ENCODE measurements at regions of chr1 and their contacts with region 1.

Region 1: DNA sequence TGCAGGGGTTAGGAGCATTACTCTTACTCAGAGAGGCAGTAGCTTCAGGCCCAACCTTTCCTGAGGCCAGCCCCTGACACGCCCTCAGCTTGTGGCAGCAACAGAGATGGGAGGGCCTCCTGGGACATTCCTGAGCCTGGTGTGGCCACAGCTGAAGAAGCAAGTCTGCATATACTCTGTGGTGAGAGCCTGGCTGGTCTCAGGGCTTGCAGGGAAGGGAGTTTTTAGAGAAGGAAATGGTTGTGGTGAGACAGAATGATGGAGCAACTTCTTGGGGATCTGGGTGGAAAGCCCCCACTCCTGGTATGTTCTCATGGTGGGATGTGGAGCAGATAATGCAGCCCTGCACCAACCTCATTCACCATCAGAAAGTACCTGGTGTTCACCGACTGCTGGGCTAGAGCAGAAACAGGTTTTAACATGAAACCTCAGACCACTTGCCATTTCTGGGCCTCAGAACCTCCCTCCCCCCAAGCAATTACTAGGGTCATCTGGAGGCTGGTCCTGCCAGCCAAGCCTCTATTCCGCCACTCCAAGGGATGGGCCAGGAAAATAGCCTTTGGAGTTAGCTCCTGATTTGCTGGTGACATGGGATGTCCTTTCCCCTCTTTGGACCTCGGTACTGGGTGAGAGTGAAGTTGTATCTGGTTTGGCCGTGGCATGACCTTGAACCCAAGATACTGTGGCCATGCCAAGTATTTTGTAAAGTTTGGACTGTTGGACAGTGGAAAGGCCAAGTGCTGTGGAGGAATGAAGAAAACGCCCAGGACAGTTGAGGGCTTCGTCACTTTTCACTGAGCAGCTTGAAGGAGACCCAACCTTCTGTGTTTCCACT is 28.1 kb upstream of the RNF19B start:
- DNase-seq: peak; percentile 98
- ATAC-seq: peak; percentile 90
- H3K4me3 ChIP-seq: peak overlapping the region; percentile 48; the same call in 1 of the 2 replicates
- H3K27ac ChIP-seq: peak overlapping the region; percentile 99
- H3K4me1 ChIP-seq: peaks cover 58% of the 10 kb centered on the region
- H3K27me3 ChIP-seq: no peaks in the 10 kb centered on the region
- CTCF ChIP-seq: no peak
- EP300 ChIP-seq: peak; percentile 58 to 91
- POLR2A ChIP-seq: no peak
- RAD21 ChIP-seq: no peak

Region 2: GRCh38 chr1:32900951-32901822 is 91.5 kb before region 1 on chr1 and contains the start of gene TMEM54:
- CTCF ChIA-PET with region 1: no interaction called
- POLR2A ChIA-PET with region 1: no interaction called
- RAD21 ChIA-PET with region 1: no interaction called
- SMC1A ChIA-PET with region 1: no interaction called
- in situ Hi-C with region 1: no loop called
- intact Hi-C with region 1: no loop called
- DNase-seq: no peak
- ATAC-seq: peak; percentile 71
- H3K4me3 ChIP-seq: no peak within 1 kb of the TSS; the same call in 1 of the 2 replicates
- H3K27ac ChIP-seq: no peak within 1 kb of the TSS
- H3K4me1 ChIP-seq: no peaks in the 10 kb centered on the region
- H3K27me3 ChIP-seq: peaks cover 2 to 7% of the 10 kb centered on the region in 2 experiments
- CTCF ChIP-seq: no peak
- EP300 ChIP-seq: no peak
- POLR2A ChIP-seq: no peak
- RAD21 ChIP-seq: no peak
- polyA plus RNA-seq, gene TMEM54: 0.07 TPM in 1 of 2 experiments, not detected in the other

Region 3: GRCh38 chr1:32964461-32965250 is 28.1 kb before region 1 on chr1 and contains the start of gene RNF19B:
- CTCF ChIA-PET with region 1: interaction called, 7 read pairs
- POLR2A ChIA-PET with region 1: interaction called, 56 read pairs
- RAD21 ChIA-PET with region 1: interaction called, 38 read pairs
- SMC1A ChIA-PET with region 1: interaction called, 30 read pairs
- in situ Hi-C with region 1: no loop called
- intact Hi-C with region 1: loop called (anchors 1 kb)
- DNase-seq: peak; percentile 77
- ATAC-seq: peak; percentile 93
- H3K4me3 ChIP-seq: peak within 1 kb of the TSS; percentile 79
- H3K27ac ChIP-seq: peak within 1 kb of the TSS; percentile 27
- H3K4me1 ChIP-seq: peaks cover 4% of the 10 kb centered on the region; the same call in 1 of the 2 replicates
- H3K27me3 ChIP-seq: no peaks in the 10 kb centered on the region
- CTCF ChIP-seq: no peak
- EP300 ChIP-seq: peak in 1 of 2 experiments; percentile 14; a peak in 1 of 4 replicates
- POLR2A ChIP-seq: peak; percentile 95
- RAD21 ChIP-seq: no peak
- polyA plus RNA-seq, gene RNF19B: 4.3 to 9.1 TPM

Region 4: GRCh38 chr1:33007190-33008050 is 14.7 kb after region 1 on chr1:
- CTCF ChIA-PET with region 1: interaction called, 8 read pairs
- POLR2A ChIA-PET with region 1: interaction called, 11 read pairs
- RAD21 ChIA-PET with region 1: interaction called, 3 read pairs
- SMC1A ChIA-PET with region 1: interaction called, 11 read pairs
- in situ Hi-C with region 1: no loop called
- intact Hi-C with region 1: no loop called
- DNase-seq: no peak
- ATAC-seq: peak; percentile 76
- H3K4me3 ChIP-seq: no peak overlapping the region
- H3K27ac ChIP-seq: no peak overlapping the region
- H3K4me1 ChIP-seq: peaks cover 5% of the 10 kb centered on the region; the same call in 1 of the 2 replicates
- H3K27me3 ChIP-seq: no peaks in the 10 kb centered on the region
- CTCF ChIP-seq: peak; percentile 17 to 36 (median 18); a peak in 3 of 6 replicates
- EP300 ChIP-seq: no peak
- POLR2A ChIP-seq: no peak; the same call in 1 of the 2 replicates
- RAD21 ChIP-seq: peak; percentile 57

Region 5: GRCh38 chr1:33030575-33030974 is 37.9 kb after region 1 on chr1:
- CTCF ChIA-PET with region 1: interaction called, 10 read pairs
- POLR2A ChIA-PET with region 1: interaction called, 8 read pairs
- RAD21 ChIA-PET with region 1: interaction called, 16 read pairs
- SMC1A ChIA-PET with region 1: interaction called, 30 read pairs
- in situ Hi-C with region 1: no loop called
- intact Hi-C with region 1: loop called (anchors 5 kb)
- DNase-seq: no peak
- ATAC-seq: no peak
- H3K4me3 ChIP-seq: no peak overlapping the region
- H3K27ac ChIP-seq: no peak overlapping the region
- H3K4me1 ChIP-seq: peaks cover 20% of the 10 kb centered on the region
- H3K27me3 ChIP-seq: no peaks in the 10 kb centered on the region
- CTCF ChIP-seq: no peak
- EP300 ChIP-seq: no peak
- POLR2A ChIP-seq: no peak
- RAD21 ChIP-seq: no peak

Region 6: DNA sequence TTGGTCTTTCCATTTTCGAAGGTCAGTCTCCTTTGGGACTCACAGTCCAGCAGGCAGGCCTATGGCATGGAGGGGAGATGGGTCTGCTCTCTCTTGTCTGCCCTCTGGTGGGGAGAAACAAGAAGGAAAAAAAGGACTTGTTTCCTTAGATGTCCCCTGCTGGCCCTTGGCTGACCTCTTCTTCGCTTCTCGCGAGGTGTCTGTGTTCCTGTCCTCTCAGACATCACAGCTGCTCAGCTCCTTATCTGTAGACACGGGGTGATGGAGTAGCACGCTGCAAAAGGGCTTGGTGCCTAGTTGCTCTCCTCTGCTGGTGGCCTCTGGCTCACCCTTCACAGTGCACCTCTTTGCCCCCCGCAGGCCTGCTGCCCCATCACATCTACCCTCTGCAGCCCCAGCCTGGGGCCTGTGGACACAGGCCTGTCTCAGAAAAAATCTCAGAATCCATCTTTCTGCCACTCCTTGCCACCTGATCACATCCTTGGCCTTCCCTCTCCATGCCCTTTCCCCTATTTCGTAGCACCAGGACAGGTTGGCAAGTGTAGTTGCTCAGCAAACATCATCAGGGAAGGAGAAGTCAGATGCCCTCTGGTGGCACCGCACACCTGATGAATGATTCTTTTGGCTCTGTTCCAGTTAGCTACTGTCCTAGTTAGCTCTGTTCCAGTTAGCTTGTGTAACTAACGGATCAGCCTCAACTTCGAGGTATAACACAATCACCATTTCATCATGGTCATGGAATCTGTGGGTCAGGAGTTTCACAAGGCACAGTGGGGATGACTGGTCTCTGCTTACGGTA is 62.7 kb after region 1 on chr1:
- CTCF ChIA-PET with region 1: interaction called, 11 read pairs
- POLR2A ChIA-PET with region 1: interaction called, 3 read pairs
- RAD21 ChIA-PET with region 1: interaction called, 5 read pairs
- SMC1A ChIA-PET with region 1: interaction called, 6 read pairs
- in situ Hi-C with region 1: no loop called
- intact Hi-C with region 1: no loop called
- DNase-seq: peak; percentile 15
- ATAC-seq: peak; percentile 91
- H3K4me3 ChIP-seq: no peak overlapping the region
- H3K27ac ChIP-seq: no peak overlapping the region
- H3K4me1 ChIP-seq: peaks cover 9% of the 10 kb centered on the region
- H3K27me3 ChIP-seq: no peaks in the 10 kb centered on the region
- CTCF ChIP-seq: peak; percentile 67 to 74 (median 74)
- EP300 ChIP-seq: no peak
- POLR2A ChIP-seq: no peak
- RAD21 ChIP-seq: peak; percentile 64

Measured in GM12878 (cell line).